Pancreas (tissue), 10 donors: ENCODE measurements at regions of chr1 and their contacts with region 1.

Region 1: DNA sequence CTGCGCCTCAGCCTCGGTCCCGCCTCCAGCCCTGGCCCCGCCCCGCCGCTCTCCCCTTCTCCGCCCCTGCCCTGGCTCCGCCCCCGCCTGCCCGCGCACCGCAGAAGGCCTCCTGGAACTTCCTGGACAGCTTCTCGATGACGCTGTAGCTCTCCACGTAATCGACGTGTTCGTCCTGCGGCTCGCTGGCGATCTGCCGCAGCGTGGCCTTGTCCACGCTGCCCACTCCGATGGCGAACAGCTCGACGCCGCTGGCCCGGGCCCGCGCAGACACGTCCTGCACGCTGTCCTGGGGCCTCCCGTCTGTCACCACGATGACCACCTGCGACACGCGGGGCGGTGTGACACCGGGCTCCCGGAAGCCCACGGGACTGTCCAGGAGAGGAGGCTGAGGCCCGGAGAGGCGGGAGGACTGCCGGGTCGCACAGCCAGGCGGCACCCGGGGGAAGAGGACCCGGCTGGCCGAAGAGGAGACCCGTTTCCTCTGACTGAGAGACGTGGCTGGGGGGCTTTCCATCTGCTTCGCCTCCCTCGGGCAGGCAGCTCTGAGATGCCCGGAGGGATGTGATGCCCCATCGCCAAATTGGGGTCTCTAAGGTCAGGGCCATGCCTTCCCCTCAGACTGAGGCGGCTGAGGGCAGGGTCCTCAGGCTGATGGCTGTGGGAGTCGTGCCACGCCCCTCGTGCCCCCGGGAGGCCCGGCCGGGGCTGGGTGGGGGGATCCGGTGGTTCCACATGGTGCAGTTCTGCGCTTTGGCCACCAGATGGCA is 4.6 kb downstream of the MATN1 start:
- DNase-seq: peak; percentile 84 to 99 (median 93)
- ATAC-seq: peak; percentile 78 to 87 (median 82)
- H3K4me3 ChIP-seq: peak overlapping the region; percentile 29 to 64 (median 38)
- H3K27ac ChIP-seq: peak overlapping the region; percentile 97 to 100 (median 98)
- H3K4me1 ChIP-seq: peaks cover 0 to 8% (median 0%) of the 10 kb centered on the region in 3 donors
- H3K27me3 ChIP-seq: no peaks in the 10 kb centered on the region
- CTCF ChIP-seq: peak; percentile 95 to 98 (median 98)

Region 2: GRCh38 chr1:30779294-30780071 is 60.7 kb after region 1 on chr1:
- intact Hi-C with region 1: loop called in 1 of 3 experiments (anchors 2 kb)
- DNase-seq: peak; percentile 55 to 96 (median 79)
- ATAC-seq: peak; percentile 71 to 77 (median 72)
- H3K4me3 ChIP-seq: no peak overlapping the region
- H3K27ac ChIP-seq: no peak overlapping the region
- H3K4me1 ChIP-seq: peaks cover 0 to 6% (median 0%) of the 10 kb centered on the region in 3 donors
- H3K27me3 ChIP-seq: peaks cover 0 to 5% (median 0%) of the 10 kb centered on the region in 4 donors
- CTCF ChIP-seq: peak; percentile 84 to 98 (median 93)

Region 3: DNA sequence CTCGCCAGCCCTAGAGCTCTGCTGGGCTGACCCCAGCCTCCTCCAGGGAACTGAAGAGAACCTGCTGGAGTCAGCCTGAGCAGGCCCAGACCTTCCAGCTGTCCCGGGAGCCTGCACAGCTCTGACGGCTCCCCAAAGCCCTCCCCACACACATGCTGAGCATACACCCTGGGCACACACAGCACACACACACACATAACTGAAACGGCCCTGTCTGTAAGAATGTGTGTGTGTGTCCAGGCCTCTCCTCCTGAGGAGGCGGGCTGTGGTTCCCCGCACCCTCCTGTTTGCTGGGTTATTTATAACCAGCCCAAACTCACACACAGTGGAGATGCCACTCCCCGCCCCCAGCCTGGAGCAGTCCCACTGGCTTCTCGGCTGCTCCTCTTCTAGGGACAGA is 169.6 kb after region 1 on chr1:
- intact Hi-C with region 1: loop called in 1 of 3 experiments (anchors 10 kb)
- DNase-seq: no peak
- ATAC-seq: peak in 3 of 4 donors; percentile 29 to 59 (median 54)
- H3K4me3 ChIP-seq: no peak overlapping the region
- H3K27ac ChIP-seq: no peak overlapping the region
- H3K4me1 ChIP-seq: no peaks in the 10 kb centered on the region
- H3K27me3 ChIP-seq: no peaks in the 10 kb centered on the region
- CTCF ChIP-seq: no peak

Region 4: DNA sequence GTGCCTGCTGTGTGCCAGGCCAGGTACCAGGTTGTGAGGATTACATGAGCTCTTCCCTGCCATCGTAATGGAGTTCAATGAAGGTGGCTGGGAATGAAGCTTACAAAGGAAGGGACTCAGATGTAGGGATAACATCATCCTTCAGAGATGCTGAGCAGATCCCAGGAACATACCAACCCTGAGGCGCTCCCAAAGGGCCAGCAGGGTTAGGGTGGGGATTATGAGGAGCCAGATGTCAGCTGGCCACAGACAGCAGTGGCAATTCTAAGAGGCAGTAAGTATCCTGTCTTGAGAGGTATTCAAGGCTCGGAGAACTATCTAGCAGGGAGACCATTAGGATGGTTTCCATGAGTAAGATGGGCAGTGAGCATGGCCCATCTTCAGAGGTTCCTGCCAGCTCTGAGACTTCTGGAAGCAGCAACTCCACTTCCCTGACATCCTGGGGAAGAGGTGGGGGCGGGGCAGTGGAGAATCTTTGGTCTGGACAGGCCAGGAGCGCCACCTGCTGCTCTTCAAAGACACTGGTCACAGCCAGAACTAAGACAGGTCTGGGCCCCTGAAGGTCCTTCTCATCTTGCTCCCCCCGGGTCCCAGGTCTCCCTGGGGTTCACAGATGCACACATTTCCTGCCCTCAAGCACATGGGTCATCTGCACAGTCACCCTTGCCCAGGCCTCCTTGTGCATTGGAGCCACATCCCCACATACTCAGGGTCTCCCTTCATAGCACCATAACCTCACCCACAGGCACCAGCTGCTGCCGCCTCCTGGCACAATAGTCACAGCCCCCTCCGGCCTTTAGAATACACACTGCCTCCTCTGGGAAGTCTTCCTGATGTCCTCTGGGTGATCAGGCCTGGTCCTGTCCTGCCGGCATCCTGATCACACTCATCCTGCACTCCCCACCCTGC is 192.5 kb after region 1 on chr1:
- intact Hi-C with region 1: loop called in 2 of 3 experiments (anchors 5 kb)
- DNase-seq: peak; percentile 75 to 93 (median 86)
- ATAC-seq: peak; percentile 79 to 88 (median 86)
- H3K4me3 ChIP-seq: no peak overlapping the region
- H3K27ac ChIP-seq: no peak overlapping the region
- H3K4me1 ChIP-seq: no peaks in the 10 kb centered on the region
- H3K27me3 ChIP-seq: no peaks in the 10 kb centered on the region
- CTCF ChIP-seq: peak; percentile 36 to 73 (median 69)